IMR-90 (cell line): ENCODE measurements at regions of chr17 and their contacts with region 1.

Region 1: DNA sequence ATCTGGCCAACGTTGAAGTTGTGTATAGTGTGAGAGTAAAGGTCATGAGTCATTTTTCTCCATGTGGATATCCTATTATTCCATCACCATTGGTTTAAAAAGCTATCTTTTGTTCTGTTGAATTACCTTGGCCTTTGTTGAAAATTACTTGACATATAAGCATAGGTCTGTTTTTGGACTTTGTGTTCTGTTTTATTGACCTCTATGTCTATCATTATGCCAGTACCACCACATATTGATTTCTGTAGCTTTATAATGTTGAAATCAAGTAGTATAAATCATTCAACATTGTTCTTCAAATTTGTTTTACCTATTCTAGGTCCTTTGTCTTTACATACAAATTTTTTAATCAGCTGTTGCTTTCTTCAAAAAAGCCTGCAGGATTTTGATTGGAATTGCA is 58.5 kb downstream of the NLK start:
- DNase-seq: no peak
- ATAC-seq: no peak
- H3K4me3 ChIP-seq: no peak overlapping the region
- H3K27ac ChIP-seq: no peak overlapping the region
- H3K4me1 ChIP-seq: 0 out of 2 replicates have a peak, but pooled peaks cover 2% of the 10 kb centered on the region
- H3K27me3 ChIP-seq: no peaks in the 10 kb centered on the region
- CTCF ChIP-seq: no peak
- POLR2A ChIP-seq: no peak
- RAD21 ChIP-seq: no peak

Region 2: DNA sequence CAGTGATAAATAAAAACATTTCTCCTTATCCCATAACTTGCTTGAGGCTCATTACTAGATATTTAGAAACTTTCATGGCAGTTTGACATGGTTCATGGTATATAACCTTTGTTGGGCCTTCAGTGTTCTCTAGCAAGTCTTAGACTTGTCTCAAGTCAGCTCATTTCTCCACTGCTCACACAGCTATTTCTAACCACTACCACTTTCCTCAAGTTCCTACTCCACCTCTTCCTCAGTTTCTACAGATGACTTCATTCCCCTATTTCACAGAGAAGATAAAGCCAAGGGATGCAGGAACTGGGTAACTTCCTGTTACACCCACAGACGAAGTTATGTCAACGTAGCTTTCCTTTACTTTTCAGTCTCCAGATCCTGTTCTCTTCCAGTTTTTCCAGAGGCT is 35.2 kb before region 1 on chr17:
- CTCF ChIA-PET with region 1: no interaction called
- POLR2A ChIA-PET with region 1: no interaction called
- dilution Hi-C with region 1: no loop called
- in situ Hi-C with region 1: no loop called
- intact Hi-C with region 1: loop called (anchors 5 kb)
- DNase-seq: peak; percentile 11
- ATAC-seq: no peak; the same call in 1 of the 2 replicates
- H3K4me3 ChIP-seq: no peak overlapping the region
- H3K27ac ChIP-seq: no peak overlapping the region
- H3K4me1 ChIP-seq: peaks cover 4% of the 10 kb centered on the region; the same call in 1 of the 2 replicates
- H3K27me3 ChIP-seq: no peaks in the 10 kb centered on the region
- CTCF ChIP-seq: no peak
- POLR2A ChIP-seq: no peak
- RAD21 ChIP-seq: no peak

Region 3: DNA sequence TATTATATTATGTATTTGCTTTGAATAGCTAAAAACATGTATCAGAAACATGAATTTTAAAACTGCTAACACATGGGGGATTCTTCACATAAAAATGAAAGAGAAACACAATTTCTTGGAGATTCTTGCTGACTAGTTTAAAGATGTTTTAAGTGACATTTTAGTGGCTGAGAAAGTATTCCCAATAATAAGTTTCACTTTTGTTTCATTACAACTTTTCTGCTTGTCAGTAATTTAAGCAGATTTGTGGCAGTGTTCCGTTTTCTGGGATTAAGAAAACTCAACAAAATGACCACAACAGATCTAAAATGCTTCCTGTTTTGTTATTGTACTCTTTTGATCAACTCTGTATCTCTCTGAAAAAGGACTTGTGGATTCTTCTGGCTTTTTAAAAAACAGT is 17.4 kb after region 1 on chr17:
- CTCF ChIA-PET with region 1: no interaction called
- POLR2A ChIA-PET with region 1: no interaction called
- dilution Hi-C with region 1: no loop called
- in situ Hi-C with region 1: no loop called
- intact Hi-C with region 1: loop called (anchors 2 kb)
- DNase-seq: no peak
- ATAC-seq: no peak
- H3K4me3 ChIP-seq: no peak overlapping the region
- H3K27ac ChIP-seq: no peak overlapping the region
- H3K4me1 ChIP-seq: peaks cover 1% of the 10 kb centered on the region
- H3K27me3 ChIP-seq: no peaks in the 10 kb centered on the region
- CTCF ChIP-seq: no peak
- POLR2A ChIP-seq: no peak
- RAD21 ChIP-seq: no peak